Calu3 (cell line): ENCODE measurements at regions of chr6 and their contacts with region 1.

Region 1: GRCh38 chr6:8983188-8983688 is 547.9 kb upstream of the SLC35B3 start:
- DNase-seq: peak; percentile 69
- H3K4me3 Mint-ChIP-seq: peak overlapping the region; percentile 19
- H3K27ac Mint-ChIP-seq: no peak overlapping the region
- H3K4me1 Mint-ChIP-seq: no peaks in the 10 kb centered on the region
- H3K27me3 Mint-ChIP-seq: no peaks in the 10 kb centered on the region
- CTCF ChIP-seq: peak; percentile 76

Region 2: GRCh38 chr6:8743168-8743745 is 240.0 kb before region 1 on chr6:
- CTCF ChIA-PET with region 1: no interaction called
- intact Hi-C with region 1: loop called (anchors 10 kb)
- DNase-seq: peak; percentile 1
- H3K4me3 Mint-ChIP-seq: peak overlapping the region; percentile 63
- H3K27ac Mint-ChIP-seq: peak overlapping the region; percentile 14
- H3K4me1 Mint-ChIP-seq: peaks cover 11% of the 10 kb centered on the region
- H3K27me3 Mint-ChIP-seq: no peaks in the 10 kb centered on the region
- CTCF ChIP-seq: no peak

Region 3: GRCh38 chr6:9405369-9405768 is 422.1 kb after region 1 on chr6:
- CTCF ChIA-PET with region 1: no interaction called
- intact Hi-C with region 1: loop called (anchors 5 kb)
- DNase-seq: peak; percentile 37
- H3K4me3 Mint-ChIP-seq: peak overlapping the region; percentile 48
- H3K27ac Mint-ChIP-seq: peak overlapping the region; percentile 89
- H3K4me1 Mint-ChIP-seq: peaks cover 36% of the 10 kb centered on the region
- H3K27me3 Mint-ChIP-seq: no peaks in the 10 kb centered on the region
- CTCF ChIP-seq: no peak

Region 4: GRCh38 chr6:9851541-9852380 is 868.5 kb after region 1 on chr6:
- CTCF ChIA-PET with region 1: no interaction called
- intact Hi-C with region 1: loop called (anchors 5 kb)
- DNase-seq: peak; percentile 60
- H3K4me3 Mint-ChIP-seq: no peak overlapping the region
- H3K27ac Mint-ChIP-seq: no peak overlapping the region
- H3K4me1 Mint-ChIP-seq: no peaks in the 10 kb centered on the region
- H3K27me3 Mint-ChIP-seq: no peaks in the 10 kb centered on the region
- CTCF ChIP-seq: no peak